Aorta (tissue), 5 donors: ENCODE measurements at regions of chr2 and their contacts with region 1.

Region 1: DNA sequence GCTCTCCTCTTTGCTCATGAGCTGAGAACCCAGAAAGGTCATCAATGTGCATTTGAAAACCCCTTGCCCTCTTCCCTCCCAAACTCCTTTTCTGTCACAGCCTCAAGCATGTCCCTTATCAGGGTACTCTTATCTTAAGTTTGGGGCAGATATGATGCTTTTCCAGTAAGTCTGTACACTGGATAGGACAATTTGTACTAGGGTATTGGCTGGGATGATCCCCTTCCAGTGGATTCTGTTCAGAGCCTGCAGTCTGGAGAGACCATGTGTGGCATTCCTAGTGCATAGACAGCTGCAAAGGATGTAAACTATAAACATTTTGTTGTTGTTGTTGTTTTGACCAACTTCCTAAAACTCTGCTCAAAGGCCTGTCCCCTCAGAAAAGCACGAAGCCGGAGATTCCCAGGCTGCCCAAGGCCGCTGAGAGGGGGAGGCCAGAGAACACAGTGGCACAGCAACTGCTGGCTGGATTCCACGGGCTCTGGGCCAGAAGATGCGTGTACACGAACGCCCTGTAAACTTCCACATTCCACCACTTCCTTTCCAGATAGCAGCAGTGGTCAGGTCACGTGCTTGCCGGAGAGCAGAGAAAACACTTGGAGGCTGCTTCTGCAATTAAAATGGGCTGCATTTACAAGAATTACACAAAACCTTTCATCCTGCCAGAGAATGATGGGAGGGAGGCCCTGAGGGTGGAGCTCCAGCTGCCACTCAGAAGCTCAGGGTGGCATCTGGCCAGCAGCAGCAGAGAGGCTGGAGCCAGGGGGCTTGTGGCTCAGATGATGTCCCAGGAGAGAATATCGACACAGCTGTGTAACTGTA is 42.1 kb downstream of the BMP10 start:
- DNase-seq: peak; percentile 98 to 99
- ATAC-seq: peak; percentile 89
- H3K4me3 ChIP-seq: no peak overlapping the region
- H3K27ac ChIP-seq: peak overlapping the region; percentile 59 to 88
- H3K4me1 ChIP-seq: peaks cover 6 to 9% of the 10 kb centered on the region in 2 donors
- H3K27me3 ChIP-seq: no peaks in the 10 kb centered on the region

Region 2: GRCh38 chr2:68251187-68251854 is 577.8 kb before region 1 on chr2:
- intact Hi-C with region 1: loop called in 1 of 2 experiments (anchors 10 kb)
- DNase-seq: peak; percentile 75 to 81
- ATAC-seq: peak; percentile 70
- H3K4me3 ChIP-seq: peak overlapping the region; percentile 96 to 100
- H3K27ac ChIP-seq: peak overlapping the region; percentile 80 to 99
- H3K4me1 ChIP-seq: peaks cover 0 to 9% of the 10 kb centered on the region in 2 donors
- H3K27me3 ChIP-seq: peaks cover 0 to 2% of the 10 kb centered on the region in 2 donors

Region 3: DNA sequence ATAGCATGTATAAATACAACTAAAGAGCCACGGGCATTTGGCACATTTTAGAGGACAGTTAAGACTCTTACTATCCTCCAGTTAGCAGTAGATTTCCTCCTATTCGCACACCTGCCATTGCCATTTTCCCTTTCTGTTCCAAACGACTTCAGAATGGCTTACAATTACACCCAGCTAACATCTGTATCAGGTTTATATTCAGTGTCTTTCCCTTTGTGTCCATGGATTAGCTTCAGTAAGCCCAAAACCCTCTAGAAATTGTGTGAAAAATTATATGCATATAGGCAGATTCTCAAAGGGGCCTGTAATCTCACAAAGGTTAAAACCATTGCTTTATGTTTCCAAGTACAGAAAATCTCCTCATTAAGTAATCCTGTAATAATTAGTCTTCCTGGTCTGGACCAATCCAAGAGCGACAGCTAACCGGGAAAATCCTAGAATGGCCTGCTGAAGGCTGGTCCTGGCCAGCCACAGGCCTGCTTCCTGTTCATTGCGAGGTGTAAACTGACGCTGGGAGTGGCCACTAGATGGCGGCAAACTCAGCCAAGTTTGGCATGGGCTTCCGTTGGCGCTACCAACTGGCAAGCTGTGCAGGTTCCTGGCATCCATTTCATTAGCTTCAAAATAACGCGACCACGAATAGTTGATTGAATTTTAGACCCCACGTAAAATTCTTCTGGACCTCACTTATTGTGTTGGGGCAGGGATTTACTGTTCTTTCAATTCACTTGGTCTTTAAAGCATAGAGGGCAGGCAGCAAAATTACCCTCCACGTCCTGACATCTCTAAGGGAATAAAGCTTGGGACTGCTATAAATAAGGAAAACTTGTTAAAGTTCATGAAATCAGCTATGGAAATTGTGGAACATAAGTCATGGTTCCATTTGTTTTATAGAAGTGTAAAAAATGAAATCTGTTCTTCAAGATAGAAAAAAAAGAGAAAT is 77.4 kb before region 1 on chr2:
- intact Hi-C with region 1: loop called (anchors 2 to 5 kb)
- DNase-seq: peak; percentile 95 to 97
- ATAC-seq: peak; percentile 93
- H3K4me3 ChIP-seq: no peak overlapping the region
- H3K27ac ChIP-seq: no peak overlapping the region
- H3K4me1 ChIP-seq: no peaks in the 10 kb centered on the region
- H3K27me3 ChIP-seq: no peaks in the 10 kb centered on the region

Region 4: GRCh38 chr2:68774569-68775271 is 54.4 kb before region 1 on chr2:
- intact Hi-C with region 1: loop called (anchors 5 kb)
- DNase-seq: peak; percentile 81 to 83
- ATAC-seq: peak; percentile 80
- H3K4me3 ChIP-seq: no peak overlapping the region
- H3K27ac ChIP-seq: no peak overlapping the region
- H3K4me1 ChIP-seq: peaks cover 0 to 2% of the 10 kb centered on the region in 2 donors
- H3K27me3 ChIP-seq: no peaks in the 10 kb centered on the region

Region 5: GRCh38 chr2:68909793-68910674 is 80.9 kb after region 1 on chr2:
- intact Hi-C with region 1: loop called in 1 of 2 experiments (anchors 5 kb)
- DNase-seq: peak; percentile 70 to 84
- ATAC-seq: peak; percentile 80
- H3K4me3 ChIP-seq: no peak overlapping the region
- H3K27ac ChIP-seq: no peak overlapping the region
- H3K4me1 ChIP-seq: peaks cover 0 to 6% of the 10 kb centered on the region in 2 donors
- H3K27me3 ChIP-seq: no peaks in the 10 kb centered on the region

Region 6: DNA sequence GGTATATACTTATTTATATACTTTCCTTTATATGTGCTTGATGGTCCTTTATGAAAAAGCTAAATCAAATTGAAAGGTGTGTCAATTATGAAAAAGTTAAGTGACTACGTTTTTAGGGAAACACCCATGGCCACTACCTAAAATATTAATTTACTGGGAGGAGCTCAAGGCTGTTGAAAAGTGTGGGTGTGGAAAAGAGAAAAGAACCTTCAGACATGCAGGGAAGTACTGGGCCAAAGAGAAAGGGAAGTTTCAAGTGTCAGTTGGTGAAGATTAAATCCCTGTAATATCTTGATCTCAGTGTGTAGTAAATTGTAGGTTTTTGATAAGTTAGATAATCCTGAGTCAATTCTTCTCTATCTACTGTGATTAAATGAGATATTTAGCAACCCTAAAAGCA is 139.1 kb after region 1 on chr2:
- intact Hi-C with region 1: no loop called
- DNase-seq: no peak
- ATAC-seq: no peak
- H3K4me3 ChIP-seq: no peak overlapping the region
- H3K27ac ChIP-seq: no peak overlapping the region
- H3K4me1 ChIP-seq: peaks cover 0 to 5% of the 10 kb centered on the region in 2 donors
- H3K27me3 ChIP-seq: no peaks in the 10 kb centered on the region